Aorta (tissue), 5 donors: ENCODE measurements at regions of chr7 and their contacts with region 1.

Region 1: GRCh38 chr7:92997152-92997551 is 120.6 kb downstream of the SAMD9 start:
- DNase-seq: no peak
- ATAC-seq: no peak
- H3K4me3 ChIP-seq: no peak overlapping the region
- H3K27ac ChIP-seq: no peak overlapping the region
- H3K4me1 ChIP-seq: no peaks in the 10 kb centered on the region
- H3K27me3 ChIP-seq: no peaks in the 10 kb centered on the region

Region 2: DNA sequence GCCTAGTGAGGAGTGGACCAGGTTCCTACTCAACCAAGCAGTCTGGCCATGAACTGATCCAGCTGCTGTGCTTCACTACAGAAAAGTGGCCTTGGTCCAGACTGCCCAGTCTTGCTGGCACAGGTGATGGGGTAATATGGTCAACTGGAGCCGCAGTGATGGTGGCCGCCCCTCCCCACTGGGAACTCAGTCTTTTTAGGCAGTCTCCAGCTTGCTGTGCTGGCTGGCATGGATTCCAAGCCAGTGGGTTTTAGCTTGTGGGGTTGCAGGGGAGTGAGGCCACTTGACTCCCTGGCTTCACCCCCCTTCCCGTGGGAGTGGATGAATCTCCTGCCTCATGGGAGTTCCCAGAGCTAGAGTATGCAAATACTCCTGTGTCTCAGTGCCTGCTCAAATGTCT is 108.1 kb before region 1 on chr7:
- intact Hi-C with region 1: no loop called
- DNase-seq: no peak
- ATAC-seq: no peak
- H3K4me3 ChIP-seq: no peak overlapping the region
- H3K27ac ChIP-seq: no peak overlapping the region
- H3K4me1 ChIP-seq: no peaks in the 10 kb centered on the region
- H3K27me3 ChIP-seq: no peaks in the 10 kb centered on the region

Region 3: GRCh38 chr7:93011351-93012294 is 14.5 kb after region 1 on chr7:
- intact Hi-C with region 1: loop called in 1 of 2 experiments (anchors 1 kb)
- DNase-seq: no peak
- ATAC-seq: no peak
- H3K4me3 ChIP-seq: no peak overlapping the region
- H3K27ac ChIP-seq: no peak overlapping the region
- H3K4me1 ChIP-seq: no peaks in the 10 kb centered on the region
- H3K27me3 ChIP-seq: no peaks in the 10 kb centered on the region

Region 4: DNA sequence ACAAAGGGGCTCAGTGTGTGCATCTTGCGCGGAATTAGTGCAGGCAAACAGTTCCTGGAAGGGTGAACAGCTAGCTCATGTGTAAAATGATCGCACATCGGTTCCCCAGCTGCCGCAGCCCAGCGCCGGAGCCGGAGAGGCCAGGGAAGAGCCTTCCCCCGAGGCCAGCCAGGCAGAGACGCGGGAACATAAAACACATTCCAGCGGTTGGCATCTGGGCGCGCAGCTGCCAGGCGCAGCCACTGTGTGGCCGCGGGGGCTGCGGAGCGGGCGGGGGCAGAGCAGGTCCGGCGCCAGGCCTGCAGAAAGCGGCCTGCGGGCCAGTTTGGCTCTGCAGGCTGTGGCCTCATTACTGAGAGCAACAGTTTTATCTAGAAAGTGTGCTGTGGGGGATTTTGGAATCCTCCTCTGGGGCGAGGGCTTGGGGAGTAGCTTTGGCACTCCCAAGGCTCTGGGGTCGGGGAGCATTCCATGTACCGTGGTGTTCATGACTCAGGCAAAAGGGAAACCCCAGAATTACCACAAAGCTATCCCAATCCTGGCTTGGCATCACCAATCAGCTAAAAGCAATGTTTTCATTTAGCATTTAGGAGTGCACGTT is 46.3 kb after region 1 on chr7:
- intact Hi-C with region 1: no loop called
- DNase-seq: peak in 1 of 2 donors; percentile 80
- ATAC-seq: peak; percentile 50
- H3K4me3 ChIP-seq: peak overlapping the region in 1 of 2 donors; percentile 10
- H3K27ac ChIP-seq: no peak overlapping the region
- H3K4me1 ChIP-seq: no peaks in the 10 kb centered on the region
- H3K27me3 ChIP-seq: no peaks in the 10 kb centered on the region